ENCODE measurements at regions of chr13 and their contacts with region 1.

Region 1: GRCh38 chr13:77697217-77698103 is at the start of gene SLAIN1:
- DNase-seq: peak; percentile 78 to 90 (median 85)
- ATAC-seq: peak; percentile 90
- H3K4me3 ChIP-seq: peak within 1 kb of the TSS; percentile 94
- H3K4me3 Mint-ChIP-seq: peak within 1 kb of the TSS; percentile 90 to 100 (median 95)
- H3K27ac ChIP-seq: peak within 1 kb of the TSS; percentile 87
- H3K27ac Mint-ChIP-seq: peak within 1 kb of the TSS; percentile 66 to 96 (median 86)
- H3K4me1 ChIP-seq: peaks cover 17 to 18% of the 10 kb centered on the region in 2 donors
- H3K4me1 Mint-ChIP-seq: peaks cover 13 to 53% (median 43%) of the 10 kb centered on the region in 7 donors
- H3K27me3 ChIP-seq: no peaks in the 10 kb centered on the region
- H3K27me3 Mint-ChIP-seq: peaks cover 0 to 40% (median 0%) of the 10 kb centered on the region in 5 donors
- total RNA-seq, gene SLAIN1: 28.3 to 67.8 (median 42.4) TPM

Region 2: DNA sequence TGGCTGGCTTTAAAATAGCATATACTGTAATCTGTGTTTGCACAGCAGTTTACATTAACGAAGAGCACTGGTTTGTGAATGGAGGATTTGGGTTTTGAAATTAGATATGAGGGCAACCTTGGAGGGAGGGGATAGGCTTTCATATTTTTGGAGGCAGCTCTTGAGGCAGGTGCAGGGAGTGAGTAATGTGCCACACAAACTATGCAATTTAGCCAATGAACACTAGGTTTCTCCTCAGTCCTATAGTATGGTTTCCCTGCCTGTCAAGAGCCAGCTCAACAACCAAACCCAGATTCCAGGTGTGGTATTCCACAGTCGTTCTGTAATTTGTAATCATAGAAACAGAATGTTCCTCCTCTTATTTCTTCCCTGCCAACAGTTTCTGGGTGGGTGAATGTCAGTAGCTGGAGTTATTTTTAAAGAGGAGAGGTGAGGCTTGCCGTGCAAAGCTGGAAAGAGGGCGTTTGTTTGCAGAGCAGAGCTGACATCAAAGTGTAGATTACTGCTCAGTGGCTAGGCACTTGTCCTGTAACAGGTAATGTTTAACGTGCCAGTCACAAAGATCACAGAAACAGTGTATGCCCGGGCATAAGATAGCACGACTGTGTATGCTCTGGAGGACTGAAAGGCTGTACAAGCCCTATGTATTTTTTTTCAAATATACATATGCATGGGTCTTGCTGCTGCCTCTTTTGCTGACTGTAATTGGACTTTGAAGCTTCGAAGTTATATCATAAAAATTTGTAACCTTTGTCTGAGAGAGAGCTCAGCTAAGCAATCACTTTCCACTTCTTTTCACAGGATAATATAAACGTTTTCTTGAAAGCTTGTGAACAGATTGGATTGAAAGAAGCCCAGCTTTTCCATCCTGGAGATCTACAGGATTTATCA is 1937.1 kb before region 1 on chr13:
- CTCF ChIA-PET with region 1: no interaction called
- POLR2A ChIA-PET with region 1: no interaction called
- intact Hi-C with region 1: loop called (anchors 5 to 10 kb)
- DNase-seq: peak in 7 of 9 donors; percentile 29 to 60 (median 46)
- ATAC-seq: peak; percentile 75
- H3K4me3 ChIP-seq: peak overlapping the region; percentile 65
- H3K4me3 Mint-ChIP-seq: peak overlapping the region; percentile 79 to 96 (median 92)
- H3K27ac ChIP-seq: peak overlapping the region; percentile 78
- H3K27ac Mint-ChIP-seq: peak overlapping the region; percentile 86 to 99 (median 96)
- H3K4me1 ChIP-seq: peaks cover 30 to 32% of the 10 kb centered on the region in 2 donors
- H3K4me1 Mint-ChIP-seq: peaks cover 37 to 72% (median 68%) of the 10 kb centered on the region in 7 donors
- H3K27me3 ChIP-seq: no peaks in the 10 kb centered on the region
- H3K27me3 Mint-ChIP-seq: no peaks in the 10 kb centered on the region

Region 3: GRCh38 chr13:77026818-77027585 is 670.5 kb before region 1 on chr13 and contains the start of gene FBXL3:
- CTCF ChIA-PET with region 1: no interaction called
- POLR2A ChIA-PET with region 1: no interaction called
- intact Hi-C with region 1: loop called (anchors 1 kb)
- DNase-seq: peak; percentile 77 to 88 (median 84)
- ATAC-seq: peak; percentile 90
- H3K4me3 ChIP-seq: peak within 1 kb of the TSS; percentile 87
- H3K4me3 Mint-ChIP-seq: peak within 1 kb of the TSS; percentile 93 to 100 (median 98)
- H3K27ac ChIP-seq: peak within 1 kb of the TSS; percentile 100
- H3K27ac Mint-ChIP-seq: peak within 1 kb of the TSS; percentile 92 to 99 (median 94)
- H3K4me1 ChIP-seq: peaks cover 30 to 35% of the 10 kb centered on the region in 2 donors
- H3K4me1 Mint-ChIP-seq: peaks cover 36 to 61% (median 51%) of the 10 kb centered on the region in 7 donors
- H3K27me3 ChIP-seq: no peaks in the 10 kb centered on the region
- H3K27me3 Mint-ChIP-seq: peaks cover 0 to 6% (median 3%) of the 10 kb centered on the region in 5 donors
- total RNA-seq, gene FBXL3: 44.2 to 94.2 (median 70.8) TPM

Region 4: GRCh38 chr13:77715233-77715891 is 17.9 kb after region 1 on chr13:
- CTCF ChIA-PET with region 1: no interaction called
- POLR2A ChIA-PET with region 1: no interaction called
- intact Hi-C with region 1: loop called in 1 of 2 experiments (anchors 2 kb)
- DNase-seq: no peak
- ATAC-seq: no peak
- H3K4me3 ChIP-seq: no peak overlapping the region
- H3K4me3 Mint-ChIP-seq: peak overlapping the region in 3 of 10 donors; percentile 16 to 32 (median 27)
- H3K27ac ChIP-seq: no peak overlapping the region
- H3K27ac Mint-ChIP-seq: peak overlapping the region in 6 of 9 donors; percentile 15 to 56 (median 31)
- H3K4me1 ChIP-seq: no peaks in the 10 kb centered on the region
- H3K4me1 Mint-ChIP-seq: peaks cover 10 to 93% (median 82%) of the 10 kb centered on the region in 7 donors
- H3K27me3 ChIP-seq: no peaks in the 10 kb centered on the region
- H3K27me3 Mint-ChIP-seq: no peaks in the 10 kb centered on the region

Region 5: DNA sequence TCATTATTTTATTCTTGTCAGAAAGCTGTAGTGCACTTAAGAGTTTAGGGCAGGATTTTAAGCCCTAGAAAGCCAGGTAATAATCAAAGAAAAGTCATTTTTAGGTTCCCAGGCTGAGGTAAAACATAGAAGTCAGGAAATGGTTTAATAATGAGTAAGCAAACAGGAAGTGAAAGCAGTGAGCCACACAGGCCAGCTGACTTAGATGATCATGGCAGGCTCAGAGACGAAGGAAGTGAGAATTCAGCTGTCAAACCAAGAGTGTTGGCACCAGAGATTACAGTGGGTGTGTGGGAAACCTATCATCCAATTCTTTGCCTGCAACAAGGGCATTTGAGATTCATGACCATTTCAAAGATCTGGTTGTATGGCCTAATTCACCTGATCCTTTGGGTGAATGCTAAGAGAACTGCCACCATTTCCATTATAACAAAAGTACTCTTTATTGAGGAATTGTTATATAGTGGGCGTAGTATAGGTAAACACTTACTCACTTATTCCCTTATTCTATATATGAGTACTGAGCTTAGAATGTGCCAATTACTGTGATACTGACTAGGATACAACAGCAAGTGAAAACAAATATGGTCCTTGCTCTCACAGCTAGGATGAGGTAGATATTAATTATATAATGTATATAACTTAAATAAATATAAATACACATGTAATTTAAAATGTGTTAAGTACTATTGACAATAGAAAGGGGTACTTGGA is 324.9 kb after region 1 on chr13:
- CTCF ChIA-PET with region 1: no interaction called
- POLR2A ChIA-PET with region 1: no interaction called
- intact Hi-C with region 1: loop called in 1 of 2 experiments (anchors 5 kb)
- DNase-seq: peak in 8 of 9 donors; percentile 9 to 54 (median 34)
- ATAC-seq: peak; percentile 94
- H3K4me3 ChIP-seq: no peak overlapping the region
- H3K4me3 Mint-ChIP-seq: peak overlapping the region in 7 of 10 donors; percentile 1 to 69 (median 5)
- H3K27ac ChIP-seq: no peak overlapping the region
- H3K27ac Mint-ChIP-seq: peak overlapping the region; percentile 0 to 86 (median 35)
- H3K4me1 ChIP-seq: peaks cover 0 to 7% of the 10 kb centered on the region in 2 donors
- H3K4me1 Mint-ChIP-seq: peaks cover 6 to 16% (median 11%) of the 10 kb centered on the region in 7 donors
- H3K27me3 ChIP-seq: no peaks in the 10 kb centered on the region
- H3K27me3 Mint-ChIP-seq: peaks cover 0 to 16% (median 3%) of the 10 kb centered on the region in 5 donors

Region 6: DNA sequence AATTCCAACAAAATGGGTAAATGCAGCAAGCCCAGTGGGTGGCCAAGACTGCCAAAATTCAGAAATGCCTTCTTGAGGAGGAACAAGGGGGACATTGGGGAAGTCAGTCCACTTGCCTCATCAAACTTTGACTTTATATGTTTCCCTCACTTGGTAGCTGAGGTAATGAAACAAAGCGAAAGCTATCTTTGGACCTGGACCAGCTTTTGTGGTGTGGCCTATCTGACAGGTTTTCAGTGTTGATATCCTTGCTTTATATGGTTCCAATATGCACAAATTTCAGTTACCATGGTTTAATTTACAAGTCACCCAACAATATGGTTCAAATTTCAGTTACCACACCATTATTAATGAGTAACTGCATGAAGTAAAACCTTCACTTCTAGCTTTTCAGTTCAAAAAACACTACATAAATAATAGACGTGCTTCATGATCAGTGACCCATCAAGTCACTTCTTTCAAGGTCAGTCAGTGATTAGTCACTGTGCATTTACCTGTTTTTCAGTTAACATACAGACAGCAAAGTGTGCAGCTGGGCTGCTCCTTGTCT is 923.6 kb after region 1 on chr13:
- CTCF ChIA-PET with region 1: no interaction called
- POLR2A ChIA-PET with region 1: no interaction called
- intact Hi-C with region 1: no loop called
- DNase-seq: no peak
- ATAC-seq: no peak
- H3K4me3 ChIP-seq: no peak overlapping the region
- H3K4me3 Mint-ChIP-seq: no peak overlapping the region
- H3K27ac ChIP-seq: no peak overlapping the region
- H3K27ac Mint-ChIP-seq: no peak overlapping the region
- H3K4me1 ChIP-seq: no peaks in the 10 kb centered on the region
- H3K4me1 Mint-ChIP-seq: peaks cover 0 to 10% (median 0%) of the 10 kb centered on the region in 7 donors
- H3K27me3 ChIP-seq: no peaks in the 10 kb centered on the region
- H3K27me3 Mint-ChIP-seq: no peaks in the 10 kb centered on the region

Region 7: GRCh38 chr13:79405829-79406596 is 1708.6 kb after region 1 on chr13 and contains the start of gene RBM26:
- CTCF ChIA-PET with region 1: no interaction called
- POLR2A ChIA-PET with region 1: no interaction called
- intact Hi-C with region 1: loop called in 1 of 2 experiments (anchors 5 kb)
- DNase-seq: peak; percentile 87 to 96 (median 93)
- ATAC-seq: peak; percentile 92
- H3K4me3 ChIP-seq: peak within 1 kb of the TSS; percentile 93
- H3K4me3 Mint-ChIP-seq: peak within 1 kb of the TSS in 5 of 10 donors; percentile 93 to 97 (median 95)
- H3K27ac ChIP-seq: peak within 1 kb of the TSS; percentile 91
- H3K27ac Mint-ChIP-seq: peak within 1 kb of the TSS in 5 of 9 donors; percentile 97 to 99 (median 99)
- H3K4me1 ChIP-seq: peaks cover 33 to 44% of the 10 kb centered on the region in 2 donors
- H3K4me1 Mint-ChIP-seq: peaks cover 31 to 49% (median 36%) of the 10 kb centered on the region in 7 donors
- H3K27me3 ChIP-seq: no peaks in the 10 kb centered on the region
- H3K27me3 Mint-ChIP-seq: no peaks in the 10 kb centered on the region
- total RNA-seq, gene RBM26: 75.4 to 136 (median 85.2) TPM